ENCODE measurements at regions of chr20 and their contacts with region 1.

Region 1: GRCh38 chr20:47317127-47317895 is 39.2 kb downstream of the ZMYND8 start:
- DNase-seq: peak; percentile 100
- H3K27ac ChIP-seq: peak overlapping the region; percentile 100
- CTCF ChIP-seq: no peak

Region 2: GRCh38 chr20:47252879-47253307 is 64.4 kb before region 1 on chr20:
- CTCF ChIA-PET with region 1: no interaction called
- POLR2A ChIA-PET with region 1: no interaction called
- DNase-seq: no peak
- H3K27ac ChIP-seq: peak overlapping the region; percentile 39
- CTCF ChIP-seq: no peak

Region 3: DNA sequence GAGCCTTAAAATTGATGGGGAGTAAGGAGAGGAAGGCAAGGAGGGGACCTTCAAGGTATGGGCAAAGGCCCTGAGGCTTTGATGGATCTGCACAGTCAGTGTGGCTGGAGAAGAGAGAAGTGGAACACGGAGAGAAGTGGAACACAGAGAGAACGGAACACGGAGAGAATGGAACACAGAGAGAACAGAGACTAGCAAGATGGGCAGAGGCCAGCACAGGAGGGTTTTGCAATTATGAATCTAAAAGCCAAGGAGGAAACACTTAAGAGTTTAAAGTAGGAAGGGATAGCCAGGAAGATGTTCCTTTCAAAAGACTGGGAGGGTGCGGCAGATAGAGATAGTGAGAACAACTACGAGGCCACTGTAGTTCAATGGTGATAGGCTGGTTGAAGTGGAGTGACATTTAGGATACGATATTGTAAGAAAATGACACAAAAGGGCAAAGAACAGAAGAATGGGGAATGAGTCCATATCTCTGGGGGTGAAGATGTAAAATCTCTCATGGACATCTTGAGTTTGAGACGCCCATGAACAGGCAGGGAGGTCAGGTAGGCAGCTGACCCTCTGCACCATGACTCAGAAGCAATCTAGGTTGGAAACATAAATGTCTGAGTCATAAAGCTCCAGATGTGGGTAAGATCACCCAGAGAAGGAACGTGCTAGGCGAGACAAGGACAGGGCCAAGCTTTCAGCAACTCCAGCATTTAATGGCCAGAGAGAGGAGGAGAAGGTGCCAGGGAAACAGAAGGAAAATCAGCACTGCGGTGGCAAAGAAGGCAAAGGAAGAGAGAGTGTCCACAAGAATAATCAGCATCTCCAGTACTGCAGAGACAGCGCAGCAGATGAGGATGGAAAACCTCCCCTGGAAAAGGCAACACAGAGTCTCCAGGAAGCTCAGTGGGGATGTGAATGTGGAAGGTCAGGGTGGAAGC is 13.9 kb after region 1 on chr20:
- CTCF ChIA-PET with region 1: no interaction called
- POLR2A ChIA-PET with region 1: interaction called, 17 read pairs
- DNase-seq: peak; percentile 94
- H3K27ac ChIP-seq: peak overlapping the region; percentile 100
- CTCF ChIP-seq: no peak

Region 4: GRCh38 chr20:47356526-47357295 is 39.4 kb after region 1 on chr20 and contains the start of gene ZMYND8:
- CTCF ChIA-PET with region 1: interaction called, 3 read pairs
- POLR2A ChIA-PET with region 1: interaction called, 54 read pairs
- DNase-seq: peak; percentile 100
- H3K27ac ChIP-seq: peak within 1 kb of the TSS; percentile 100
- CTCF ChIP-seq: no peak

Region 5: GRCh38 chr20:47487175-47487917 is 170.0 kb after region 1 on chr20:
- CTCF ChIA-PET with region 1: no interaction called
- POLR2A ChIA-PET with region 1: no interaction called
- DNase-seq: no peak
- H3K27ac ChIP-seq: peak overlapping the region; percentile 44
- CTCF ChIP-seq: no peak

Measured in RWPE1 (cell line).